Left ventricle myocardium inferior (tissue), 1 donor: ENCODE measurements at regions of chr14 and their contacts with region 1.

Region 1: GRCh38 chr14:39266871-39267591 is 33.3 kb downstream of the MIA2 start:
- DNase-seq: peak; percentile 84
- H3K4me3 ChIP-seq: peak overlapping the region; percentile 91
- H3K27ac ChIP-seq: peak overlapping the region; percentile 99
- H3K4me1 ChIP-seq: peaks cover 50% of the 10 kb centered on the region
- H3K27me3 ChIP-seq: no peaks in the 10 kb centered on the region
- CTCF ChIP-seq: no peak

Region 2: GRCh38 chr14:39174560-39175444 is 92.2 kb before region 1 on chr14 and contains the start of gene PNN:
- intact Hi-C with region 1: loop called (anchors 10 kb)
- DNase-seq: peak; percentile 96
- H3K4me3 ChIP-seq: peak within 1 kb of the TSS; percentile 97
- H3K27ac ChIP-seq: peak within 1 kb of the TSS; percentile 96
- H3K4me1 ChIP-seq: peaks cover 40% of the 10 kb centered on the region
- H3K27me3 ChIP-seq: no peaks in the 10 kb centered on the region
- CTCF ChIP-seq: no peak
- total RNA-seq, gene PNN: 30.1 TPM

Region 3: GRCh38 chr14:39558525-39558924 is 291.5 kb after region 1 on chr14:
- intact Hi-C with region 1: no loop called
- DNase-seq: no peak
- H3K4me3 ChIP-seq: no peak overlapping the region
- H3K27ac ChIP-seq: no peak overlapping the region
- H3K4me1 ChIP-seq: no peaks in the 10 kb centered on the region
- H3K27me3 ChIP-seq: no peaks in the 10 kb centered on the region
- CTCF ChIP-seq: no peak

Region 4: GRCh38 chr14:39621223-39621622 is 354.2 kb after region 1 on chr14:
- intact Hi-C with region 1: no loop called
- DNase-seq: no peak
- H3K4me3 ChIP-seq: no peak overlapping the region
- H3K27ac ChIP-seq: no peak overlapping the region
- H3K4me1 ChIP-seq: no peaks in the 10 kb centered on the region
- H3K27me3 ChIP-seq: no peaks in the 10 kb centered on the region
- CTCF ChIP-seq: no peak